Common myeloid progenitor, CD34-positive (primary cell): ENCODE measurements at regions of chr12 and their contacts with region 1.

Region 1: DNA sequence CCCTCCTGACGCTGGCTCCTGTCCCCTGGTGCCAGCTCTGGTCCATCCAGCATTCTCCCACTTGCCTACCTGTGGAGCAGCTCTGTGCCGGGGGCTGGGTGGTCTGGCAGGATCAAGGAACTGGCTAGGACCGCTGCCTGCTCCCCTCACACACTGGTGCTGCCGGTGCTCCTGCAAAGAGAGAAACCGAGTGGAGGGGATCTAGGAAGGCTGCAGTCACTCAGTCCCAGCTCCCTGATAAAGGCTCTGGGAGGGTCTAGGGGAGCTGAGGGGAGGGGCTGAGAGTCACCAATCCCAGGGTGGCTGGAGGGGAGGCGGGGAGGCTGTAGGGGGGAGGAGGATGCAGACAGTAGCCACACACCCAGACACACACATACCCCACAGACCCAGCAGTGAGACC is at the start of gene TAC3:
- DNase-seq: no peak
- H3K4me3 ChIP-seq: no peak within 1 kb of the TSS
- H3K27ac ChIP-seq: no peak within 1 kb of the TSS
- H3K4me1 ChIP-seq: no peaks in the 10 kb centered on the region
- H3K27me3 ChIP-seq: peaks cover 0 to 8% (median 0%) of the 10 kb centered on the region in 5 experiments

Region 2: GRCh38 chr12:56908136-56908535 is 108.2 kb before region 1 on chr12:
- CTCF ChIA-PET with region 1: no interaction called
- POLR2A ChIA-PET with region 1: no interaction called
- DNase-seq: no peak
- H3K4me3 ChIP-seq: no peak overlapping the region
- H3K27ac ChIP-seq: no peak overlapping the region
- H3K4me1 ChIP-seq: no peaks in the 10 kb centered on the region
- H3K27me3 ChIP-seq: no peaks in the 10 kb centered on the region

Region 3: DNA sequence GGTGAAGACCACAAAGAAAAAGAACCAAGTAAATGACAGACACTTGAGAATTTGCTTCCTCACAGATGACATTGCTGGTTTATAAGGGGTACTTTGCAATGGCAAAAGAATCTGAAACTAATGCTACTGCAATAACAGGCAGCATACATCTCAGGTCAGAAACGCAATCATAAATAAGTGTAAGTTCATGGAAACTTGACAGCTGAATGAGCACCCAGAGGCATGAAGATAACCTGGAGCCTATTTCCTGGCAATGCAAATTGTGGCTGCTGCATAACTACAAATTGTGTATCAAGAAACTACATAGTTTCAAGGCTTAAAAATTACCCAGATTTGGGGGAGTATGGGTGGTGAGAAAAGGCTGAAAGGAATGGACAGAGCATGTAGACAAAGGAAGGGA is 42.1 kb after region 1 on chr12:
- CTCF ChIA-PET with region 1: interaction called, 121 read pairs
- POLR2A ChIA-PET with region 1: no interaction called
- DNase-seq: no peak
- H3K4me3 ChIP-seq: no peak overlapping the region
- H3K27ac ChIP-seq: peak overlapping the region in 1 of 2 experiments; percentile 1
- H3K4me1 ChIP-seq: no peaks in the 10 kb centered on the region
- H3K27me3 ChIP-seq: no peaks in the 10 kb centered on the region

Region 4: GRCh38 chr12:57063991-57064685 is 47.8 kb after region 1 on chr12:
- CTCF ChIA-PET with region 1: interaction called, 121 read pairs
- POLR2A ChIA-PET with region 1: no interaction called
- DNase-seq: peak in 2 of 3 donors; percentile 56 to 74
- H3K4me3 ChIP-seq: peak overlapping the region in 1 of 7 experiments; percentile 34
- H3K27ac ChIP-seq: peak overlapping the region; percentile 27 to 29
- H3K4me1 ChIP-seq: peaks cover 0 to 9% (median 0%) of the 10 kb centered on the region in 4 experiments
- H3K27me3 ChIP-seq: no peaks in the 10 kb centered on the region